BJ (cell line): ENCODE measurements at regions of chr5 and their contacts with region 1.

Region 1: DNA sequence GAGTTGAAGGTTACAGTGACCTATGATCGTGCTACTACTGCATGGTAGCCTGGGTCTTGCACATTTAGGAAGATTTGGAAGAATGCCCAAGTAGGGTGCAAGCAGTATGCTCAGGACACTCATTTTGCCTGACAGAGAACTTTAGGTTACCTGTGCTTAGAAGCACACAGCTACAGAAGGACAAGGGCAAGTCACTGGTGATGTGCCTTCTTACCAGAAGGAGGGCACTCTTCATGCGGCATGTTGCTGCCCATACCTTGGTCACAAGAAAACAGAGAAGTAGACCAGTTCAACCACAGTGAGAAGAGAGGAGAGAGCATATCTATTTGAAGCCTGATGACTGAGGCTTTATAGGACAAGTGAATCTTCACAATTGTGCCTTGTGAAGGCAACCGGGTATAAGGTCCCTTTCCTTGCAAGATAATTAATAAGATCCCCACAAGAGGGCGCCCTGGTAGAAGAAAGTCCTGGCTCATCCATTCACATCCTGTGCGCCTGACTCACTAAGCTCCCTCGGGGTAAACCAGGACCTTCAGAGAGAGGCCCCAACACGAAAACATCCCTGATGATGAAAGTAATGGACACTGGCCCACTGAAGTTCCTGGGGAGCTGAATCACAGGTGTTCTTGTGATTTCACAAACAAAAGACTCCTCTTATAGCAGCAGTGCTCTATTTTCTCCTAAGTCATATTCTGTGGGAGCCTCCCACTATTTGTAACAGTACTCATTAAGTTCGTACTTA is 38.1 kb upstream of the STARD4 start:
- DNase-seq: peak; percentile 92
- H3K4me3 ChIP-seq: no peak overlapping the region
- H3K27me3 ChIP-seq: no peaks in the 10 kb centered on the region
- CTCF ChIP-seq: peak; percentile 50

Region 2: DNA sequence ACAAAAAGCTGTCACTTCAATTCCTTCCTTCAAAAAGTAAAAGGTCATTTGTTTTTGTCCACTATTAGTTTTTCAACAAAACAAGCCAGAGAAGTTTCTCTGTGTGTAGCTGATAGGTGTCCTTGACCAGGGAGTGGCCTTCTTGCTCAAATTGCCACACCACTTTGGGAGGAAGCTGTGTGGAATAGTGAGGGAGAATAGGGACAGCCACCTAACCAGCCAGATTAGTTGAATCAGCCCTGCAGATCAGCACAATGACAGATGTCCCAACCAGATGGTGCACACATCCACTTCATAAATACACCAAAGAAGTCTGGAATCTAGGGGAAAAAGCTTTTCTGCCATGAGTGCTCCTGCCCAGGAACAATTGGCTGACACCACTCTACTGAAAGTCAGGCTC is 169.3 kb after region 1 on chr5:
- CTCF ChIA-PET with region 1: interaction called, 4 read pairs
- POLR2A ChIA-PET with region 1: interaction called, 21 read pairs
- DNase-seq: no peak
- H3K4me3 ChIP-seq: no peak overlapping the region
- H3K27me3 ChIP-seq: no peaks in the 10 kb centered on the region
- CTCF ChIP-seq: no peak

Region 3: DNA sequence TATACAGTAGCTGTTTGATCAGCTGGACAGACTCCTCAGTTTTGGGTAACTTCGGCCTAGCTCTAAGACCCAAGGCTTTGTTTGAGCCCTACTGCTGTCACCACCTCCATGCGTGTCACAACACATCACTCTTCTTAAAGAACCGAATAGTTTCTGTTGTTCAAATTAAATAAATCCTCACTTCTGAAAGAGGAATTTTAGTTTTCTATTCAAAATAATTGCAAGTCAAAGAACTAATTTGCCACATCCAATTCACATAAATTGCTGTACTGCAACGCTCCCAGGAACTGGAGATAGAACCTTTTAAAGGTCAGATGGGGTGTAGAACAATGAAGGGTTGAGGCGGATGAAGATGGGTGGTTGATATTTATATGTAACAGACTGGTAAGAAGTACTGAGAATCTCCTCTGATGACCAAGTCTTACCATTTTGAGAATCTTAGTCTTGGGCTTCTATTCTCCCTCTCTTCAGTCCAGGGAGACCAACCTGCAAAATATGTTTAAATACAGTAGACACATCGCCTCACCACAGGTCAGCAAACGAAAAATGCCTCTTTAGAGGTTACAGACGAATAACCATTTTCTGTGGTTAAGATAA is 205.0 kb after region 1 on chr5:
- CTCF ChIA-PET with region 1: interaction called, 11 read pairs
- POLR2A ChIA-PET with region 1: interaction called, 4 read pairs
- DNase-seq: no peak
- H3K4me3 ChIP-seq: peak overlapping the region; percentile 73
- H3K27me3 ChIP-seq: no peaks in the 10 kb centered on the region
- CTCF ChIP-seq: no peak

Region 4: DNA sequence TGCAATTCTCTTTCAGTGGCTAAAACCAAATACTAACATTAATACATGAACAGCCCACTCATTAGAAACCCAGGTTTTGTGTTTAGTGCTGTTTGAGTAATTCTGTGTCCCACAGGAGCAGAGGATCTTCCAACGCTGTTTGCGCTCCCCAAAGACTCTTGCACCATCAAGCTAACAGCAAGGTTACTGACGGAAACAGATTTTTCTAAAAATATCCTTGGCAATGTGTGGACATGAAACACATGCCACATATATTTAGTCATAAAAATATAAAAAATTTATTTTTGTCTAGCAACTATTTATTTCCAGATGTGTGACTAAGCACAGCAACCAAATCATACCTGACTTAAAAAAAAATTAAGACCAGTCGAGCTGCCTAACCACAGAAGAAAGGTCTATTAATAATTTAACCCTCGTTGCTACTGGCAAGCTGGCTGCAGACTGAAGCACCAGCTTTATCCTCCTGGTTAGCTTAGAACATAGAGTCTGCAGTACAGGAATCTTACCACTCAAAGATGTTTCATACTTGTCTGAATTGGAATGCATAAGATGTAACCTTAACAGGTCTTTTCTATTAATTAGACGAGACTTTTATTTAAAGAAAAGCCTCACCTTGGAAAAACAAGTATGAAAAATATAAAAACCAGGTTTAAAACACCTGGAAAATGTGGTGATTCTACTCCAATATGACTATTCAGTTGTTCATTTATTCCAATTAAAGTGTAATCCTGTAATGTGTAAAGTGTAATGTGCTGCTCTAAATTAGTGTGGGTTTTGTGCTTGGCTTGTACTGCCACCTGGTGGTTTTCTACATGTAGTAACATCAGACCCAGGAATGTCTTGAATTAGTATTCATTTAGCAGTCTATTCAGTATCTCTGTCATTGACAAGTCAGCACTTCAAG is 596.1 kb after region 1 on chr5:
- CTCF ChIA-PET with region 1: interaction called, 13 read pairs
- POLR2A ChIA-PET with region 1: interaction called, 4 read pairs
- DNase-seq: peak; percentile 80
- H3K4me3 ChIP-seq: no peak overlapping the region
- H3K27me3 ChIP-seq: no peaks in the 10 kb centered on the region
- CTCF ChIP-seq: peak; percentile 65